Heart right ventricle (tissue), 16 donors: ENCODE measurements at regions of chr6 and their contacts with region 1.

Region 1: DNA sequence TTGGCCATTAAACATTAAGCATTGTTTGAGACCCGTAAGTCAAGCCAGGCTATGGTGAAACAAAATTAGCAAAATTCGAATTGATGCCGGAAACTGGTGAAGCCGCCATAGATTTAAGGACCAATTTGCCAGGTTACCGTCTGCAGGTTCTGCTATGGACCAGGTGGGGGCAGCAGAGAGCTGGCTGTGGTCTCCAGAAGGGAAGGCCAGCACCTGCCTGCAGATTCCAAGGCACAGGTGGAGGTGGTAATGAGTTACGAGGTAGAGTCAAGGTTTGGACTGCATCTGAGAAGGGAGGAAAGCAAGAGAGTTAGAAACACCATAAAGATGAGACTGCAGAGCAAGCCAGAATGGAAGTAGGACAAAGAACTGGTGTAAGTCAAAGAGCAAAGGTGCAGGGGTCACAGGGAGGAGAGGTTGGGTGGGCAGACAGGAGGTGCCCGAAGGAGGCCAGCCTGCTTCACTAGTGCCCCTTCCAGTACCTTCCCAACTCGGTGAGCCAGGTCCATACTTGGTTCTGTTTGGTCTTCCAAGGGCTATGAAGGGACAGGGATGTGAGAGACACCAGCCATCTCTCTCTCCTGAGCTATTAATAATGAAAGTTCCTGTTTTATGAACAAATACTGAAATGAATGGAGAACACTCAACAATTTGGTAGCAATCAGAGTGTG is 131.6 kb upstream of the ESR1 start:
- DNase-seq: no peak
- ATAC-seq: peak in 2 of 8 donors; percentile 40
- H3K4me3 ChIP-seq: no peak overlapping the region
- H3K27ac ChIP-seq: no peak overlapping the region
- H3K4me1 ChIP-seq: peaks cover 0 to 12% (median 0%) of the 10 kb centered on the region in 9 donors
- H3K27me3 ChIP-seq: no peaks in the 10 kb centered on the region
- CTCF ChIP-seq: peak; percentile 62 to 86 (median 73)

Region 2: DNA sequence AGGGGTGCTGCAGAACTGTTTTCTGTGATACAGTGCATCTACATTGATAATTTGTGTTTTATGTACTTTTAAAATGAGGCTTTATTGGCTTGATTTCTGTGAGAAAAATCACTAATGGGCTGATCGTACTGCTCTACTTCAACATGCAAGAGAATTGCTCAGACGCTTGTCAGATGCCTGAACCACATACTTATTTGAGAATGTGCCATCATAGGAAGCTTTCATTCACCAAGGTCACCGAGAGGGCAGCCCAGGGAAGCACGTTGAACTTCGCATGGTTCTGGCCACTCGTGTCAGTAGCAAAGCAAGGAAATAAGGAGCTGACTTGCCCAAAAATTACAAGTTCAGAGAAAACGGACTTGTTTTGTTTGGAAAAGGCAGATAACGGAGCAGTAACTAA is 604.6 kb before region 1 on chr6:
- intact Hi-C with region 1: no loop called
- DNase-seq: peak in 1 of 2 donors; percentile 53
- ATAC-seq: peak; percentile 44 to 79 (median 67)
- H3K4me3 ChIP-seq: peak overlapping the region in 5 of 10 donors; percentile 2 to 22 (median 13)
- H3K27ac ChIP-seq: peak overlapping the region in 8 of 10 donors; percentile 12 to 57 (median 42)
- H3K4me1 ChIP-seq: peaks cover 0 to 45% (median 21%) of the 10 kb centered on the region in 9 donors
- H3K27me3 ChIP-seq: no peaks in the 10 kb centered on the region
- CTCF ChIP-seq: no peak

Region 3: DNA sequence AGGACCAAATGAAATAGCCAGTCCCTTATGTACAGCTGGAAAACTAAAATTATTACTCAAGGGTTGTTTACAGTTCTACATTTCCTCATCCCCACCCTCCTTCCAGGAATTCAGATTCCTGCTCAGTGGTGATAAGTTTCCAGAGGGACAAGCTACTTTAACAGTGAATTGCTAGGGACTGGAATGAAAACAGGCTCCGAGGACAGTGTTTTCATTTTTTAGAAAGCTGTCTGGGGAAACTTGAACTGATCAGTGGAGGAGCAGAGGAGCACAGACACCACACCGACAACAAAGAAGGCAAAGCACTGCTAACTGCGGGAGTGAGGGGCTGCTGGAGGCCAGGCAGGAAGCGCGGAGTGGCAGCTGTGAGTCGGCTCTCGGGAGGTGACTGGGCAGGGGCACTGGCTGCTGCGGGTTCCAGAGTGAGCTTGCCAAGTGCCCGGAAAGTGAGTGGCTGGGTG is 453.8 kb after region 1 on chr6:
- intact Hi-C with region 1: loop called in 3 of 10 experiments (anchors 5 to 10 kb)
- DNase-seq: no peak
- ATAC-seq: peak; percentile 58 to 88 (median 80)
- H3K4me3 ChIP-seq: peak overlapping the region in 9 of 10 donors; percentile 16 to 50 (median 44)
- H3K27ac ChIP-seq: peak overlapping the region; percentile 55 to 88 (median 72)
- H3K4me1 ChIP-seq: peaks cover 4 to 50% (median 26%) of the 10 kb centered on the region in 9 donors
- H3K27me3 ChIP-seq: no peaks in the 10 kb centered on the region
- CTCF ChIP-seq: no peak